ENCODE measurements at regions of chr10 and their contacts with region 1.

Region 1: GRCh38 chr10:8150401-8150905 is 96.0 kb downstream of the GATA3 start:
- DNase-seq: no peak
- H3K4me3 ChIP-seq: no peak overlapping the region
- H3K27ac ChIP-seq: no peak overlapping the region
- H3K4me1 ChIP-seq: no peaks in the 10 kb centered on the region
- H3K27me3 ChIP-seq: no peaks in the 10 kb centered on the region
- CTCF ChIP-seq: no peak
- POLR2A ChIP-seq: no peak

Region 2: DNA sequence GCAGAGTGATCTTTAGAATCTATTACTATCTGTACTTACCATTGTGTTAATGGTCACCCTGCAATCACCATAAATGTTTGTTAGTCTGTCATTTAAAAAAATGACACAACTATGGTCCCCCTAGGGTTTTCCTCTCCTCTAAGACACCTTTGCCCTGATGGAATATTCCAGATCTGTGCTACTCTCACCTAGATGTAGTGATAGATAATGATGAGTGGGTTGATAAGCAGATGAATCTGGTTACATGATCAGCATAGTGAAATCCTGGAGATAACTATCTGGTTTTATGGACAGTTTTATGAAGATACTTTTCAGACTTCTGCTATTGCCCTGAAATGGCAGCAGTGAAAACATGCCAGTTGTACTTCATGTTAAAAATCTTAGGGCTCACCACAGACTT is 56.4 kb after region 1 on chr10:
- intact Hi-C with region 1: loop called (anchors 2 kb)
- DNase-seq: no peak
- H3K4me3 ChIP-seq: no peak overlapping the region
- H3K27ac ChIP-seq: no peak overlapping the region
- H3K4me1 ChIP-seq: no peaks in the 10 kb centered on the region
- H3K27me3 ChIP-seq: no peaks in the 10 kb centered on the region
- CTCF ChIP-seq: no peak
- POLR2A ChIP-seq: no peak

Region 3: GRCh38 chr10:8752151-8752839 is 601.8 kb after region 1 on chr10:
- intact Hi-C with region 1: loop called (anchors 5 kb)
- DNase-seq: no peak
- H3K4me3 ChIP-seq: peak overlapping the region in 1 of 3 donors; percentile 19
- H3K27ac ChIP-seq: no peak overlapping the region
- H3K4me1 ChIP-seq: no peaks in the 10 kb centered on the region
- H3K27me3 ChIP-seq: no peaks in the 10 kb centered on the region
- CTCF ChIP-seq: no peak
- POLR2A ChIP-seq: no peak

Region 4: GRCh38 chr10:9126728-9127127 is 976.3 kb after region 1 on chr10:
- intact Hi-C with region 1: no loop called
- DNase-seq: no peak
- H3K4me3 ChIP-seq: no peak overlapping the region
- H3K27ac ChIP-seq: no peak overlapping the region
- H3K4me1 ChIP-seq: no peaks in the 10 kb centered on the region
- H3K27me3 ChIP-seq: no peaks in the 10 kb centered on the region
- CTCF ChIP-seq: no peak
- POLR2A ChIP-seq: no peak

Measured in breast epithelium (tissue), 4 donors.